ENCODE measurements at regions of chr2 and their contacts with region 1.

Region 1: DNA sequence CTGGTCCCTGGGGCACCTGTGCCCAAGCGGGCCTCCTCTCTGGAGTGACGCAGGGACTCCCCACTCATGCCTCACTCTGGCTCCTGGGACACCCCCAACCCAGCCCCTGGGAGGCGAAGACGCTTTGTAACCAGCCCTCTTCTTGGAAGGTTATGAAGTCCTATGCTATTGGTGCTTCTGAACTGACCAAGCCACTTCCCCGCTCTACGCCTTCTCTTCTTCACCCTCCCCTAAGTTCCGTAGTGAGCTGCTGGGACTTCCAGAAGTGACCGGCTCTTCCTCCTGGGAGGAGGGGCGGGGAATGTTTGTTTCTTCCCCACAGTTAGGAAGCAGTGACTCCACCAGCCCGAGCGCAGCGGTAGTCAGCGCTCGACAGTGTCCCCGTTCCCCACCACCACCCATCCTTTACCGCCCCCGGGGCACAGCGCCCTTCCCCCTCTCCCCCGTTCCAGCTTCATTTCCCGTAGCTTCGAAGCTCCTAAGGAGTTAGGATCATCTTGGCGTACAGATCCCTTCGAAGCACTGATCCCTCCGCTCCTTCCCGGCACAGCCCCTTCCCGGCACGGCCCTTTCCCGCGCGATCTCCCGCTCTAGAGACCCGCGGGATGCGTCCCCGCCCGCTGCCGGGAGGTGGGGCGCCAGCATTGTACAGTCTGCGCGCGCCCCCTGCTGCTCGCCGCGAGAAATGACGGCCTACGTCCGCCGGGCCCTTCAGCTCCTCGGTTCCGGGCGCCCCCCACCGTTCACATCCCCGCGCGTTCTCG is 25.3 kb upstream of the NOTO start:
- DNase-seq: peak; percentile 91
- H3K4me3 Mint-ChIP-seq: peak overlapping the region; percentile 80
- H3K27ac Mint-ChIP-seq: no peak overlapping the region
- H3K4me1 Mint-ChIP-seq: peaks cover 16% of the 10 kb centered on the region
- H3K27me3 Mint-ChIP-seq: peaks cover 80% of the 10 kb centered on the region

Region 2: GRCh38 chr2:72780477-72780876 is 396.6 kb before region 1 on chr2:
- CTCF ChIA-PET with region 1: no interaction called
- DNase-seq: no peak
- H3K4me3 Mint-ChIP-seq: no peak overlapping the region
- H3K27ac Mint-ChIP-seq: no peak overlapping the region
- H3K4me1 Mint-ChIP-seq: no peaks in the 10 kb centered on the region
- H3K27me3 Mint-ChIP-seq: no peaks in the 10 kb centered on the region

Region 3: GRCh38 chr2:72793798-72794440 is 383.1 kb before region 1 on chr2:
- CTCF ChIA-PET with region 1: no interaction called
- DNase-seq: no peak
- H3K4me3 Mint-ChIP-seq: no peak overlapping the region
- H3K27ac Mint-ChIP-seq: no peak overlapping the region
- H3K4me1 Mint-ChIP-seq: peaks cover 7% of the 10 kb centered on the region
- H3K27me3 Mint-ChIP-seq: no peaks in the 10 kb centered on the region

Region 4: GRCh38 chr2:72993147-72993932 is 183.7 kb before region 1 on chr2:
- CTCF ChIA-PET with region 1: interaction called, 41 read pairs
- DNase-seq: peak; percentile 57
- H3K4me3 Mint-ChIP-seq: no peak overlapping the region
- H3K27ac Mint-ChIP-seq: no peak overlapping the region
- H3K4me1 Mint-ChIP-seq: no peaks in the 10 kb centered on the region
- H3K27me3 Mint-ChIP-seq: no peaks in the 10 kb centered on the region

Region 5: DNA sequence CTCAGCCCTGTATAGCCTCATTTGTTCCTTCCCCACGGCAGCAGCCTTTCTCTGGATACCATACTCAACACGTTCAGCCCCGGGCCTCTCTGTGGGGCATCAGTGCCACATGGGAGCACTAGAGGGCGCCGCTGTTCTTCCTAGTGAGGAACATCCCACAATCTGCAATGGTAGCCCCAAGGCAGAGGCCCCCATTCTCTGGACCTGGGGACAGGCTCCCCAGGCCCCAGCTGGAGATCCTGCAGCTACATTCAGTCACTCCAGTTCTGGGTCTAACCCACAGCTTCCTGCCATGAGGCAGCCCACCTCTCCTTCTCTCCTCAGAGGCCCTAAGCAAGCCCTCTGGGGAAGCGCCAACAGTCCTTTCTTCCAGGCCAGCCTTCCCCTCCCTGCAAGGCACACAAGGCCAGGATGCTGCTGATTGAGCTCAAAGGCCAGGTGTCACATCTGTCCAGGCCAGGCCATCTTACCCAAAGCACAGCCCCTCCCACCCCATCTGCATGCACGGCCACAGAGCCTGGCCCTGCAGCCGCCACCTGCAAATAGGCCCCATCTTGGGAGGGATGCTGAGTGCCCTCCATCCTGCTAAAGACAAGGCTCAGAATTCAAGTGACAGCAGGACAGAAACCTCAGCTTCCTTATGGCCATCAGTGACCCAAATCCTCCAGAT is 91.2 kb before region 1 on chr2:
- CTCF ChIA-PET with region 1: interaction called, 34 read pairs
- DNase-seq: peak; percentile 89
- H3K4me3 Mint-ChIP-seq: no peak overlapping the region
- H3K27ac Mint-ChIP-seq: no peak overlapping the region
- H3K4me1 Mint-ChIP-seq: no peaks in the 10 kb centered on the region
- H3K27me3 Mint-ChIP-seq: no peaks in the 10 kb centered on the region

Region 6: GRCh38 chr2:73187549-73187948 is 10.5 kb after region 1 on chr2:
- CTCF ChIA-PET with region 1: interaction called, 16 read pairs
- DNase-seq: no peak
- H3K4me3 Mint-ChIP-seq: no peak overlapping the region
- H3K27ac Mint-ChIP-seq: no peak overlapping the region
- H3K4me1 Mint-ChIP-seq: no peaks in the 10 kb centered on the region
- H3K27me3 Mint-ChIP-seq: peaks cover 63% of the 10 kb centered on the region